ENCODE measurements at regions of chr15 and their contacts with region 1.

Region 1: DNA sequence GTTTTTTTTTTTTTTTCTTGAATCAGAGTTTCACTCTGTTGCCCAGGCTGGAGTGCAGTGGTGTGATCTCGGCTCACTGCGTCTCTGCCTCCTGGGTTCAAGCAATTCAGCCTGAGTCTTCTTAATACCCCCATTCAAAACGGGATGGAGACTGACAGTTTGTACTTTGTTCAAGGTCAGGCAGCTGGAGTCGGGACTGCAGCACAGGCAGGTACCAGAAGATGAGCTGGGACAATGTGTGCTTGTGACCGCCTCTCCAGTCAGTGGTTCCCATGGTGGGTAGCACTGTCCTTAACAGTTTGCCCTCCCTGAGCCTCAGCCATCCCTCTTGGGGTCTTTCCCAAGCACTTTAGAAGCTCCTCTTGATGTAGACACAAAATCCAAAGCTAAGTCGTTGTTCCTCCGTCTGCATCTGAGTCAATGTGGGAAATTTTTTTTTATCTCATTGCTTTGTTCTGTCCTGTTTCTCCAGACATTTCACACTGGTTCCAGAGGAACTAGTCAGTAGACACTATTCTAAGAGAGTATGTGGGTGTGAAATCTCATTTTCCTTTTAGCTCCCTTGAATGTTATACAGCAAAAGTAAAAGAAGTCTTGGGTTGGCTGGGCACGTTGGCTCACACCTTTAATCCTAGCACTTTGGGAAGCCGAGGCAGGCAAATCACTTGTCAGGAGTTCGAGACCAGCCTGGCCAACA is 5.3 kb upstream of the TTLL13 start:
- DNase-seq: no peak
- ATAC-seq: no peak
- H3K4me3 ChIP-seq: no peak overlapping the region
- H3K27ac ChIP-seq: no peak overlapping the region
- H3K4me1 ChIP-seq: no peaks in the 10 kb centered on the region
- H3K27me3 ChIP-seq: no peaks in the 10 kb centered on the region
- CTCF ChIP-seq: no peak
- POLR2A ChIP-seq: no peak
- RAD21 ChIP-seq: no peak

Region 2: GRCh38 chr15:90201130-90201949 is 42.8 kb before region 1 on chr15 and contains the start of gene SEMA4B:
- CTCF ChIA-PET with region 1: no interaction called
- POLR2A ChIA-PET with region 1: no interaction called
- dilution Hi-C with region 1: no loop called
- in situ Hi-C with region 1: no loop called
- intact Hi-C with region 1: no loop called
- DNase-seq: peak; percentile 32
- ATAC-seq: peak; percentile 90
- H3K4me3 ChIP-seq: peak within 1 kb of the TSS; percentile 91
- H3K27ac ChIP-seq: peak within 1 kb of the TSS; percentile 11; the same call in 1 of the 2 replicates
- H3K4me1 ChIP-seq: peaks cover 8% of the 10 kb centered on the region
- H3K27me3 ChIP-seq: no peaks in the 10 kb centered on the region
- CTCF ChIP-seq: no peak
- POLR2A ChIP-seq: 0 out of 2 replicates have a peak, but pooled peaks have one; percentile 32
- RAD21 ChIP-seq: no peak
- total RNA-seq, gene SEMA4B: 5.0 and 6.9 TPM in 2 replicates

Region 3: DNA sequence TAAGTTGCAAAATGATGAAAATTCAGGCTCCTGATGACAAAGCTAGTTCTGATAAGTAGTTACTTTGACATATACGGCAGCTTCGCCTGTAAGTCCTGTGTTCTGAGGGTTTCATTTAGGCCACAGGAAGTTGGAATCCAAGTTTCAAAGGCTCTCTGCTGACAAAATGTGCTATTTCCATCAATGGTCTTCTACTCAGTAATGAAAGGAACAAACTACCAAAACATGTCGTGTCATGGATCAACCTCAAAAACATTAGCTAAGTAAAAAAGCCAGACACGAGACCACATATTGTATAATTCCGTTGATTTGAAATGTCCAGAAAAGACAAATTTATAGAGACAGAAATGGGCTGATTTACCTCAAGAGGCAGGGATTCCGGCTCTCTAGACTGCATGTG is 43.9 kb after region 1 on chr15:
- CTCF ChIA-PET with region 1: interaction called, 3 read pairs
- POLR2A ChIA-PET with region 1: no interaction called
- dilution Hi-C with region 1: no loop called
- in situ Hi-C with region 1: no loop called
- intact Hi-C with region 1: loop called (anchors 2 kb)
- DNase-seq: no peak
- ATAC-seq: no peak
- H3K4me3 ChIP-seq: no peak overlapping the region
- H3K27ac ChIP-seq: no peak overlapping the region
- H3K4me1 ChIP-seq: no peaks in the 10 kb centered on the region
- H3K27me3 ChIP-seq: no peaks in the 10 kb centered on the region
- CTCF ChIP-seq: no peak
- POLR2A ChIP-seq: no peak
- RAD21 ChIP-seq: no peak

Region 4: GRCh38 chr15:90489514-90489913 is 245.4 kb after region 1 on chr15:
- CTCF ChIA-PET with region 1: no interaction called
- POLR2A ChIA-PET with region 1: no interaction called
- dilution Hi-C with region 1: no loop called
- in situ Hi-C with region 1: no loop called
- intact Hi-C with region 1: no loop called
- DNase-seq: no peak
- ATAC-seq: no peak
- H3K4me3 ChIP-seq: no peak overlapping the region
- H3K27ac ChIP-seq: no peak overlapping the region
- H3K4me1 ChIP-seq: peaks cover 4% of the 10 kb centered on the region
- H3K27me3 ChIP-seq: no peaks in the 10 kb centered on the region
- CTCF ChIP-seq: no peak
- POLR2A ChIP-seq: no peak
- RAD21 ChIP-seq: no peak